Activated CD8-positive, alpha-beta T cell treated with anti-CD3 and anti-CD28 coated beads for 36 hours (primary cell): ENCODE measurements at regions of chr20 and their contacts with region 1.

Region 1: DNA sequence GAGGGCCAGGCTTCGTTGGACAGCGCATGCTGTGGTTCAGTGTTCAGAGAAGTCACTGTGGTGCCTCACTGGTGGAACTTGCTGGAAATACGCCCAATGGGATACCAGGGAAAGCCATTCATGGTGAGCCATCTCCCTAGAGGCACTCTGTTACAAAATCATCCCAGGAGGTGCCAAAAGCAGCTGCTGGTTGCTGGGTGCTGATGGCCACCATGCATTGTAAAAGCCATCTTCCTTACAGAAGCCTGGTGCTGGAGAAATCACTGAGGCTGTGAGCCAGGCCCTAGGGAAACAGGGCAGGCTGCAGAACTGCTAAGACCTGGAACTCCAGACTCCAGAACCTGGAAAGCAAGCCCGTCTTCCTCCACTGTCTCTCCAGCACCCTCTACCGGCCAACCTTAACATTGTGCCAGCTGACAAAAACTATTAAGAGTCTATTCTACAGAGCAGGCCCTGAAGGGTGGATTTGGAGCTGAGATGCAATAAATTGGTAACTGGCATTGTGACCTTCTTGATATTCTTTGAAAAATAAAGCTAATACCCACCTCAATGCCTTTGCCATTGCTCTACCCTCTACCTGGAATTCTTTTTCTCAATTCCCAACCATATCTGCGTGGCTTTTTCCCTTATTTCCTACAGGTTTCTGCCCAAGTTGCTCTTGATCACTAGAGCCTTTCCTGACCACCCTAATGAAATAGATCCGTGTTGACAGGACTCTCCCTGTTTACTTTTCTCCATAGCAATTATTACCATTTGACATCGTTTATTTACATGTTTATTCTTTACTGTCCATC is 18.5 kb downstream of the SNRPB start:
- DNase-seq: peak; percentile 79
- ATAC-seq: peak; percentile 72
- H3K4me3 Mint-ChIP-seq: no peak overlapping the region
- H3K27ac Mint-ChIP-seq: no peak overlapping the region
- H3K4me1 Mint-ChIP-seq: peaks cover 31% of the 10 kb centered on the region
- H3K27me3 Mint-ChIP-seq: no peaks in the 10 kb centered on the region
- CTCF ChIP-seq: peak; percentile 91

Region 2: DNA sequence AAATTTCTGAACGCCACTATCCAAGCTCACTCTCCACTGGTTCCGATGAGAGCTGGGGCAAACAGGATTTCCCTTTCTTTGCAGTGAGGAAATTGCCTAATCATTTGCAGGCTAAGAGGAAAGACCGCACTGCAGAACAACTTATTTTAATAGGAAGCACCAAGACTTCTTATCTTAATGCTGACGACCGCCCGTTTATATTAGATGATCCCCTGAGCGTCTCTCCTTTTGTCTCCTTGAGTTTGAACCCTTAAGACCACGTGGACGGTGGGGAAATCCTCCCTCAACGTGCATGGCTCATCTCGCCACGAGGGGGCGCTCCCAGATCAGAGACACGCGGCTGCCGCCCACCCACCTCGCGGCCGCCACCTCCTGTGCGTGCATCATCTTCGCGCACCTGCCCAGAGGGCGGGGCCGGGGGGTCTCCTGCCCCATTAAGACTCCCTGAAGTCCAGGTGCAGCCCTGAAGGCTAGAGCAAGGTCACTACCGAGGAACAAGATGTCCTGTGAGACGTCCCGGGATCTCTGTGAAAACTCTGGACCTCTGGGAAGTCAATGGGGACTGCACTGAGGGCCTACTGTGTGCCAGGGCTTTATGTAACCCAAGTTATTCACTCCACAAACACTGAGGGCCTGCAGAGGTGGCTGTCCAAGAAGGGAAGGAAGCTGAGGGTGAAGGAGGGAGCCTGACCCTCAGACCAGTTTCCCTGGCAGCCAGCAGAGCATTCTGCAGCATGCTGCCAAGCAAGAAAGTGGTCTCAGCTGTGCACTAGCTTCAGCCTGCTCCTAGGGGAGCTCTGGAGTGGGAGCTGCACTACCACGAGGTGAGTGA is 486.4 kb before region 1 on chr20:
- CTCF ChIA-PET with region 1: interaction called, 3 read pairs
- POLR2A ChIA-PET with region 1: no interaction called
- intact Hi-C with region 1: loop called (anchors 10 kb)
- DNase-seq: peak; percentile 91
- ATAC-seq: peak; percentile 92
- H3K4me3 Mint-ChIP-seq: peak overlapping the region; percentile 40
- H3K27ac Mint-ChIP-seq: peak overlapping the region; percentile 35
- H3K4me1 Mint-ChIP-seq: peaks cover 17% of the 10 kb centered on the region
- H3K27me3 Mint-ChIP-seq: peaks cover 32% of the 10 kb centered on the region
- CTCF ChIP-seq: peak; percentile 95

Region 3: GRCh38 chr20:2357114-2357513 is 95.0 kb before region 1 on chr20:
- CTCF ChIA-PET with region 1: interaction called, 13 read pairs
- POLR2A ChIA-PET with region 1: no interaction called
- intact Hi-C with region 1: no loop called
- DNase-seq: no peak
- ATAC-seq: no peak
- H3K4me3 Mint-ChIP-seq: no peak overlapping the region
- H3K27ac Mint-ChIP-seq: no peak overlapping the region
- H3K4me1 Mint-ChIP-seq: no peaks in the 10 kb centered on the region
- H3K27me3 Mint-ChIP-seq: peaks cover 12% of the 10 kb centered on the region
- CTCF ChIP-seq: no peak

Region 4: DNA sequence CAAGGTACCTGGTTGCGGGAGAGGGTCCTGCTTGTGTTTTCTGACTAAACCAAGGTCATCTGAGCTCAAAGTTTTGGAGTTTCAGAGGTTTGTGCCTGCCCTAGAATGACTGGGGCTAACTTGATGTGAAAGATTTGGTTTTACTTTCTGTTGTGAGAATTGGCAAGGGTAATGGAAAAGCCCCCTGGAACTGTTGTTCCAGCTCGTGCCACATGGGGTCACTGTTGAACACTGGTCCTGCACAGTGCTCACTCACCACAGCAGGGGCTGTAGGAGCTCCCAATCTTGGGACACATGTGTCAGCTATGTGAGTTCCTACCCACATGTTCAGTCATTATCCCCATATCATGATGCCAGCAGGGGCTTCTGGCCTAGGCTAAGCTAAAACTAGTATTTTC is 65.0 kb before region 1 on chr20:
- CTCF ChIA-PET with region 1: interaction called, 64 read pairs
- POLR2A ChIA-PET with region 1: no interaction called
- intact Hi-C with region 1: no loop called
- DNase-seq: peak; percentile 80
- ATAC-seq: peak; percentile 94
- H3K4me3 Mint-ChIP-seq: no peak overlapping the region
- H3K27ac Mint-ChIP-seq: no peak overlapping the region
- H3K4me1 Mint-ChIP-seq: peaks cover 6% of the 10 kb centered on the region
- H3K27me3 Mint-ChIP-seq: peaks cover 2% of the 10 kb centered on the region
- CTCF ChIP-seq: peak; percentile 69

Region 5: GRCh38 chr20:2429061-2429460 is 23.1 kb before region 1 on chr20:
- CTCF ChIA-PET with region 1: interaction called, 34 read pairs
- POLR2A ChIA-PET with region 1: no interaction called
- intact Hi-C with region 1: no loop called
- DNase-seq: no peak
- ATAC-seq: no peak
- H3K4me3 Mint-ChIP-seq: no peak overlapping the region
- H3K27ac Mint-ChIP-seq: no peak overlapping the region
- H3K4me1 Mint-ChIP-seq: no peaks in the 10 kb centered on the region
- H3K27me3 Mint-ChIP-seq: peaks cover 8% of the 10 kb centered on the region
- CTCF ChIP-seq: no peak

Region 6: DNA sequence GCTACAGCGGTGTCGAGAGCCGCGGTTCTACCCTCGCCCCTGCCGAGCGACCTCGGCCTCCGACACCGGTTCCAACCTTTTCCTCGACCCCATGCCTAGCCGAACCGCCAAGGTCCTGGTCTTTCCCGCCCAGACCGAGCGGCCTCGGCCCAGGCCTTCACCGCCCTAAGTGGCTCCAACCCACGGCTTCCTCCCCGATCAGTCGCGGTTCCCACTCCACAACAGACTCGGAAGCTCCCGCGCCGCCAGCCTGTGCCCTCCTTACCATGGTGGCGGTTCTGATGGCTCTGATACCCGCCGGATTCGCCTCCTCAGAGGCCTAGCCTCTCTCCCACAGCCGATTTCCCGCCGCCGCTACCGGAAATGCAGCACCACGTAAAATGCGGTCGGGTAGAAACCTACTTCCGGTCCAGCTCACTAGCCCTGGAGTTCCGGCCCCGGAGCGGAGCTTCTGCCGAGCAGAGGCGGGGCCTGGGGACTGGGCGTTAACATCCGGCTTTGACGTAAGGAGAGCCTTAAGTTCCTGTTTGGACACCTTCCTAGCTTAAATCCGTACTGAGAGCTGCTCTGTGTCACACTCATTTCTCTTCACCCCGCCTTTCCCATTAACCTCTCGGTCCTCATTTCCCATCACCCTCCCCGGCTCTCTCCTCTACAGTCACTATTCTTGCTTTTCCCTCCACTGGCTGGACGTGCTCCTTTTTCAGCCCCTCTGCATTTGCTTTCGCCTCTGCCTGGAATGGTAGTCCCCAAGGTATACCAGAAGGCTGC is 18.5 kb after region 1 on chr20 and contains the start of gene SNRPB:
- CTCF ChIA-PET with region 1: interaction called, 18 read pairs
- POLR2A ChIA-PET with region 1: interaction called, 87 read pairs
- intact Hi-C with region 1: no loop called
- DNase-seq: peak; percentile 97
- ATAC-seq: peak; percentile 98
- H3K4me3 Mint-ChIP-seq: peak within 1 kb of the TSS; percentile 89
- H3K27ac Mint-ChIP-seq: peak within 1 kb of the TSS; percentile 100
- H3K4me1 Mint-ChIP-seq: peaks cover 51% of the 10 kb centered on the region
- H3K27me3 Mint-ChIP-seq: no peaks in the 10 kb centered on the region
- CTCF ChIP-seq: no peak
- total RNA-seq, gene SNRPB: 469 to 479 TPM